Adrenal gland (tissue), 19 donors: ENCODE measurements at regions of chr22 and their contacts with region 1.

Region 1: DNA sequence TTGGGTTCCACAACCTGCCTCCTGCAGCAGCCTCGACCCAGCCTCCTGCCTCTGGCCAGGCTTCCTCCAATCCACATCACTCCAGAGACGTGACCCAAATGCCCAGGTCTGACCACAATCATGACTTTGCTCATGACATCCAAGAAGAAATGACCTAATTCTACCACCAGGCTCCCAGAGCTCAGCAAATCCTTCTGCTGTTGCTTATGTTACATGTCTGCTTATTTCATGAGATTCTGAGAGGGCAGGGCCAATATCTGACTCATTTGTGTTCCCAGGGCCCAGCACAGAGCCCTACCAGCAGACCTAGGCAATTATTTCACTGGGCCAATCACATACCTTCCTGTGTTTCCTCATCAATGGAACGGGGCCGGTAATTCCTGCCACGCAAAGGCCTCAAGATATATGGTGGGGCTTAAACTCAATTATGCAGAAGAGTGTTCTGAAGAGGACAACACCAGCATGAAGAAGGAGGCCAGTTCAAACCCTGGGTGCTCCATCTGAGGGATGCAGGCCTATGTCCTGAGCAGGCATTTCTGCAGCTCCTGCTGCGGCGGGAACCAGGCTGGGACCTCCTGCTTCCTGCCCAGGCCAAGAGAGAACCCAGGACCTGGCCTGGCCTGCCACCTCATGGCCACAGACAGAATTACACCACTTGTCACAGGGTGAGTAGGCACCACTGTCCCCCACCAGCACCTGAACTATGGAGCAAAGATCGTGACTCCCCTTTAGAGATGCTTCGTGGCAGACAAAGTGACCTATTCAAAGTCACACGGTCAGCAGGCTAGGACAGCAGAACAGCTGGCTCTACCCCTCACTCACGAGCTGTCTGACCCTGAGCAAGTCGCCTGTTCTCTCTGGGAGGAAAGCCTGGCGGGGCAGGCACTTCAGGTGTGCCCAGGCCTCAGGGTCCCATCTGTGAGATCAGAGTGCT is 5.9 kb downstream of the CENPM start:
- DNase-seq: peak; percentile 84 to 96 (median 91)
- H3K4me3 ChIP-seq: no peak overlapping the region
- H3K27ac ChIP-seq: peak overlapping the region; percentile 12 to 76 (median 38)
- H3K4me1 ChIP-seq: peaks cover under 1 to 11% of the 10 kb centered on the region in 2 donors
- H3K27me3 ChIP-seq: no peaks in the 10 kb centered on the region
- CTCF ChIP-seq: peak; percentile 81 to 99 (median 98)
- POLR2A ChIP-seq: no peak

Region 2: GRCh38 chr22:41589391-41590241 is 351.5 kb before region 1 on chr22 and contains the start of gene PMM1:
- intact Hi-C with region 1: no loop called
- DNase-seq: peak; percentile 100
- H3K4me3 ChIP-seq: peak within 1 kb of the TSS; percentile 62 to 96 (median 86)
- H3K27ac ChIP-seq: peak within 1 kb of the TSS; percentile 44 to 91 (median 81)
- H3K4me1 ChIP-seq: peaks cover 8 to 15% of the 10 kb centered on the region in 2 donors
- H3K27me3 ChIP-seq: no peaks in the 10 kb centered on the region
- CTCF ChIP-seq: no peak
- POLR2A ChIP-seq: peak; percentile 89 to 97
- total RNA-seq, gene PMM1: 39.4 to 105 (median 71.6) TPM

Region 3: GRCh38 chr22:41697126-41697775 is 243.8 kb before region 1 on chr22:
- intact Hi-C with region 1: loop called (anchors 2 to 5 kb)
- DNase-seq: peak; percentile 84 to 97 (median 93)
- H3K4me3 ChIP-seq: peak overlapping the region in 1 of 4 donors; percentile 34
- H3K27ac ChIP-seq: peak overlapping the region in 2 of 5 donors; percentile 26 to 50
- H3K4me1 ChIP-seq: peaks cover 0 to 13% of the 10 kb centered on the region in 2 donors
- H3K27me3 ChIP-seq: no peaks in the 10 kb centered on the region
- CTCF ChIP-seq: peak; percentile 93 to 99 (median 96)
- POLR2A ChIP-seq: no peak

Region 4: GRCh38 chr22:41752011-41752970 is 188.8 kb before region 1 on chr22:
- intact Hi-C with region 1: loop called (anchors 2 to 10 kb)
- DNase-seq: no peak
- H3K4me3 ChIP-seq: no peak overlapping the region
- H3K27ac ChIP-seq: no peak overlapping the region
- H3K4me1 ChIP-seq: no peaks in the 10 kb centered on the region
- H3K27me3 ChIP-seq: no peaks in the 10 kb centered on the region
- CTCF ChIP-seq: no peak
- POLR2A ChIP-seq: no peak

Region 5: DNA sequence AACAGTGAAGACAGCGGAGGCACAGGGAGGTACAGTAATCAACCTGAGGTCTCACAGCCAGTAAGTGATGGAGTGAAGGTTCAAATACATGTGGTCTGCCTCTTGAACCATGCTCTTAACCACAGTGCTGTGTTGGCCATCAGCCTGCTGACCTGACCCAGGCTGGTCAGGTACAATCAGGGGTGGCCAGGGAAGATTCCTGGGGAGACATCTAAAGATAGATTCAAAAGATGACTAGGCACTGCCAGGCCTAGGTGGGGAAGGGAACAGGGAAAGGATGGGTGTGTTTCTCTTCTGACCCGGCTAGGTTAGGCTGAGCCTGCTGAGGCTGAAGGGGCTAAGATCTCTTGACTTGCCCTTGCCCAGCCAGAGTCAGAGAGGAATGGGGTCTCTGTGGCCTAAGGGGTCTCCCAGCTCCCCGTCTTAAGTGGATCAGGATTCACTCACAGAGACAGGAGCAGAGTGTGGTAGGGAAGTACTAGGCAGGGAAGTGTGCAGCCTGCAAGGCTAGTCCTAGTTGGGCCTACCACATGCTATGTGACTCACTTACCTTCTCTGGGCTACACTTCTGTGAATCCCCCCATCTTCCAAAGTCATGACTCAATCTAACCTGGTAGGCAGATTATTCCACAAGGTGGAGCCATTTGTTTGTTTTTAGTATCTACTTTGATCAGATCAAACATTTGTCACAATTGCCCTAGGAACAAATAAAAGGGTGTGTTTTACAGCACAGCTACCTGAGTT is 118.6 kb before region 1 on chr22:
- intact Hi-C with region 1: loop called (anchors 5 kb)
- DNase-seq: peak in 1 of 7 donors; percentile 30
- H3K4me3 ChIP-seq: no peak overlapping the region
- H3K27ac ChIP-seq: peak overlapping the region in 3 of 5 donors; percentile 41 to 95 (median 70)
- H3K4me1 ChIP-seq: peaks cover 34 to 62% of the 10 kb centered on the region in 2 donors
- H3K27me3 ChIP-seq: no peaks in the 10 kb centered on the region
- CTCF ChIP-seq: peak; percentile 21 to 74 (median 62)
- POLR2A ChIP-seq: no peak

Region 6: DNA sequence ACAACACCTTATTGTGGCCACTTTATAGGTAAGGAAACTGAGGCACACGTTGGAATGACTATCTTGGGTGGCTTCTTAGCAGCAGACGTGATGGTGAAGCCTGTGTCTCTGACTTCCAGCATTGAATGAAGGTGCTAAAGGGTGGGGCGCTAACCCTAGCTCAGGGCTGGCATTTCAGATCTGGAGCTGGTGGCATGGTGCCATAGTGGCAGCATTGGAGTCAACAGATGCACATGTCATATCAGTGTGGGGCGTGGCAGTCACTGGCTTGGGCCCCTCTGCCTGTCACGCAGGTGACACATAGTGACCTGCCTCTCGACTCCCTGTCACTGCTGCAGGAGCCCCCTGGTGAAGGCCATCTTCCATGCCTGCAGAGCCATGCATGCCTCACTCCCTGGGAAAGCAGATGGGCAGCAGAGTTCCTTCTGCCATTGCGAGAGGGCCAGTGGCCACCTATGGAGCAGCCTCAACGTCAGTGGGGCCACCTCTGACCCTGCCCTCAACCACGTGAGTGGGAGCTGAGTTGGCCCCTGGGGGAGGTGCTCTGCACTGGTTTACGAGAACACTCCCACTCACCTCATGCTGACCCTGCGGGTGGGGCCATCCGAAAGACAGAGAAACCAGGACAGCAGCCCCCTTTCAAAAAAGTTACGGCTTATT is 41.0 kb before region 1 on chr22:
- intact Hi-C with region 1: no loop called
- DNase-seq: peak in 1 of 7 donors; percentile 8
- H3K4me3 ChIP-seq: no peak overlapping the region
- H3K27ac ChIP-seq: peak overlapping the region in 1 of 5 donors; percentile 13
- H3K4me1 ChIP-seq: no peaks in the 10 kb centered on the region
- H3K27me3 ChIP-seq: no peaks in the 10 kb centered on the region
- CTCF ChIP-seq: no peak
- POLR2A ChIP-seq: no peak